AG04450 (cell line): ENCODE measurements at regions of chr16 and their contacts with region 1.

Region 1: DNA sequence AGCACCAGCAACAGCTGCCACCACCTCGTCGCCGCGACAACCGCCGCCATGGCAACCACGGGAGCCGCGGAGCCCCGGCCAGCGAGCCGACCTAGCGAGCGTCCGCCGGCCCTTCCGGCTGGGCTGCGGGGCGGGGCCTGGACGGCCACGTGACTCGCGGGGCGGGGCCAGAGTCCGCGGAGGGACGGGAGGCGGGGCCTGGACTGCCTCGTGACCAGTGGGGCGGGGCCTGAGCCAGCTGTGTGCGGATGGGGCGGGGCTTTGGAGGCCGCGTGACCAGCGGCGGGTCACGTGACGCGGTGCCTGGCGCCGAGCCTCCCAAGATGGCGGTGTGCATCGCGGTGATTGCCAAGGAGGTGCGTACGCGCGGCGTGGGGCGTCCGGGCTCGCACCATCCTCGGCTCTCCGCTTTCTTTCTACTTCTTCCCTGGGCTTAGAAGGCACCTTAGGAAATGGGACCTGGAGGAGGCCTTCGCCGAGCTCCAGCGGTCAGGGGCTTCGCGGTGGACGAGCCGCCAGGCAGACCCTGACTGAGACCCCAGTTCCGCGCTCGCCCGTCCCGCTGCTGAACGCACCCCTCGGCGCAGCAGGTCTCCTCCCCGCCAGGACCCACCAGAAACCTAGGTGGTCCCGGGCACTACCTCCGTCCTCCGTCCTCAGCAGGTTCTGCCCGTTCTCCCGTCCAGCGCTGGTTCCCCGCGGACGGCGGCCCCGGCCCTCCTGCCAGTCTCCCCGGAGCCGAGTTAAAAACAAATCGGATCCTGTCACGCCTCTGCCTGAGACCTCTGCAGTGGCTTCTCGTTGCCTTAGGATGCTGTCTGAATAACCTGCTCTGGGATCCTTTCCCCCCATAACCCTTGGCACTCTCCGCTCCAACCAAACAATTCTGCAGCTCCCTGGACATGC is at the starts of genes GALNS and TRAPPC2L:
- DNase-seq: peak; percentile 86
- H3K4me3 ChIP-seq: peak within 1 kb of the TSS; percentile 96
- H3K27ac ChIP-seq: peak within 1 kb of the TSS; percentile 47
- H3K27me3 ChIP-seq: no peaks in the 10 kb centered on the region
- CTCF ChIP-seq: no peak
- polyA plus RNA-seq, gene GALNS: 11.6 and 18.5 TPM in 2 replicates
- polyA plus RNA-seq, gene TRAPPC2L: 72.8 and 101 TPM in 2 replicates

Region 2: GRCh38 chr16:88523309-88524161 is 333.5 kb before region 1 on chr16:
- CTCF ChIA-PET with region 1: no interaction called
- POLR2A ChIA-PET with region 1: no interaction called
- DNase-seq: no peak
- H3K4me3 ChIP-seq: no peak overlapping the region
- H3K27ac ChIP-seq: no peak overlapping the region
- H3K27me3 ChIP-seq: no peaks in the 10 kb centered on the region
- CTCF ChIP-seq: no peak

Region 3: GRCh38 chr16:88815901-88816589 is 41.0 kb before region 1 on chr16:
- CTCF ChIA-PET with region 1: interaction called, 16 read pairs
- POLR2A ChIA-PET with region 1: interaction called, 5 read pairs
- DNase-seq: no peak
- H3K4me3 ChIP-seq: no peak overlapping the region
- H3K27ac ChIP-seq: no peak overlapping the region
- H3K27me3 ChIP-seq: no peaks in the 10 kb centered on the region
- CTCF ChIP-seq: peak; percentile 65